ENCODE measurements at regions of chr7 and their contacts with region 1.

Region 1: GRCh38 chr7:20238754-20239324 is 21.7 kb upstream of the MACC1 start:
- DNase-seq: peak; percentile 55 to 85 (median 64)
- H3K4me3 ChIP-seq: no peak overlapping the region
- H3K4me3 Mint-ChIP-seq: no peak overlapping the region
- H3K27ac ChIP-seq: peak overlapping the region in 1 of 2 donors; percentile 52
- H3K27ac Mint-ChIP-seq: peak overlapping the region; percentile 30 to 90 (median 81)
- H3K4me1 ChIP-seq: peaks cover 5 to 11% of the 10 kb centered on the region in 2 donors
- H3K4me1 Mint-ChIP-seq: peaks cover 10% of the 10 kb centered on the region
- H3K27me3 ChIP-seq: no peaks in the 10 kb centered on the region
- H3K27me3 Mint-ChIP-seq: peaks cover 0 to 1% (median 1%) of the 10 kb centered on the region in 3 donors
- CTCF ChIP-seq: no peak

Region 2: DNA sequence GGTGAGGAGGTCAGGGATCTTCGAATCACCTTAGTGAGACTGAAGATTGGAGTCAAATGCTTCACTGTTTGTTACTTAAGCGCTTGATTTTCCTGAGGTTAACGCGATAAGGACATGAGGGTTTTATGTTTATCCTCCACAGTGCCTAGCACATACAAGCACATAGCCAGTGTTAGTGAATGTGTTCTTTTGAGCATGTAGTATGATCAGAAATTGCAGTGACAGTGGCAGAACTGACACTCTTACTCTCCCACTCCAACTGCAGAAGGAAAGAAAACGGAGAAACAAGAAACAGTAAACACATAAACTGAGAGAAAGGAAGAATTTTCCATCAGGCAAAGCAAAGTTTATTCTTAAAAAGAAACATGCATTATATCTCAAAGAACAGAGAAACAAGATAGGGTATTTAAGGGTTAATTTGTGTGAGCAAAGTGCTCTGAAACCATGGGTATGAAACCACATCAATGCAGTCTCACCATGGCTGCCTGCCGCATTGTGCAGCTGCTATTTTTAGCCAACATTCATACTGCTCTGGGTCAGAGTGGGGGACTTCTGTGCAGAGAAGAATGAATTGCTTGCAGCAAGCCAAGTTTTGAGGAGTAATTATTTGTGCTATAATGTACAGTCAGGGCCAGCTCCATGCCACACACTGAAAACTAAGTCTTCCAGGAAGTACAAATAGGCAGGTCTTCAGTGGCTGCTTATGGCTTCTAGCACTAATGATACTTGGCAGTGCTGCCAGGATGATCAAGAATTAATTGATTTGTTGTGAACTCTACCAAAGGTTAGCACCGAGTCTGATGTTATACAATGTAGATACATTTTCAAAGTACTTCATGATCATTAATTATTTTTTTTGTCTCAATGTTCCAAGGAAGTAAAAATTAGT is 173.6 kb before region 1 on chr7:
- intact Hi-C with region 1: no loop called
- DNase-seq: no peak
- H3K4me3 ChIP-seq: no peak overlapping the region
- H3K4me3 Mint-ChIP-seq: no peak overlapping the region
- H3K27ac ChIP-seq: no peak overlapping the region
- H3K27ac Mint-ChIP-seq: no peak overlapping the region
- H3K4me1 ChIP-seq: no peaks in the 10 kb centered on the region
- H3K4me1 Mint-ChIP-seq: no peaks in the 10 kb centered on the region
- H3K27me3 ChIP-seq: no peaks in the 10 kb centered on the region
- H3K27me3 Mint-ChIP-seq: peaks cover 0 to 2% (median 0%) of the 10 kb centered on the region in 3 donors
- CTCF ChIP-seq: no peak

Region 3: GRCh38 chr7:20299647-20300312 is 60.9 kb after region 1 on chr7:
- intact Hi-C with region 1: loop called in 1 of 2 experiments (anchors 5 kb)
- DNase-seq: peak in 2 of 3 donors; percentile 10 to 26
- H3K4me3 ChIP-seq: no peak overlapping the region
- H3K4me3 Mint-ChIP-seq: no peak overlapping the region
- H3K27ac ChIP-seq: no peak overlapping the region
- H3K27ac Mint-ChIP-seq: peak overlapping the region in 3 of 7 donors; percentile 10 to 44 (median 20)
- H3K4me1 ChIP-seq: peaks cover 0 to 3% of the 10 kb centered on the region in 2 donors
- H3K4me1 Mint-ChIP-seq: peaks cover 20% of the 10 kb centered on the region
- H3K27me3 ChIP-seq: no peaks in the 10 kb centered on the region
- H3K27me3 Mint-ChIP-seq: no peaks in the 10 kb centered on the region
- CTCF ChIP-seq: no peak